MCF 10A (cell line): ENCODE measurements at regions of chr1 and their contacts with region 1.

Region 1: DNA sequence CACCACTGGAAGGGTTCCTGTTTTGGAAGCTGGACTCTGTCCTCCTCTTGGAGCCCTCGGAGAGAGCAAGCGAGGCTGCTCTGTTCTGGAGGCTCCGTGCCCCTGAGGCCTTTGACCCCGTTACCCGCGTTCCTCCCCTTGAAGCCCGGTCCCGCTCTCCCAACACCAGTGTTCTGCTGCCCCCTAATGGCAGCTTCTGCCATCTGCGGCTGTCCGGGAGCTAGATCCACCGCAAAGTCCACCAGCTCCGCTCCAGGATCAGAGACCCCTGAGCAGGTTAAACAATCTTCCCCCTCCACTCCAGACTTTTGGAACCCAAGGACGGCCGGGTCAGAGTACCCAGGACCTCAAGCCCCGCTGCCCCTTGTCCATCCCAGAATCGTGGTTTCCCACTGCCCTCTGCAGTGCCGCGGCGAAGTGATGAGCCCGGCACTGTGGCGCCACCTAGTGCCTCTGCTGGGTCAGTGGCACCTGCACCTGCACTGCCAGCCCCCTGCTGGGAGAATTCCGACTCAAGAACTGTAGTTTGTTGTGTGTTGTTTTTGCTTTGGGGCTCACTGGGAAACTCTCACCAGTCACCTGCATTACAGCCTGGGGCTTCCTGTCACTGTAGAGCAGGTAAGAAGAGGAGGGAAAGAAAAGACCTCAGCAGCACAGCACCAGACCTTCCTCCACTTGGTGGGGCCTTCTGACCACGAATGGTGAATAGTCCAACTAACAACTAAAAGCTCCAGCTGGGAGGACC is 63.5 kb upstream of the NFASC start:
- DNase-seq: peak; percentile 94
- H3K4me3 Mint-ChIP-seq: peak overlapping the region; percentile 69
- H3K27ac Mint-ChIP-seq: no peak overlapping the region
- H3K4me1 Mint-ChIP-seq: no peaks in the 10 kb centered on the region
- H3K27me3 Mint-ChIP-seq: peaks cover 25% of the 10 kb centered on the region
- CTCF ChIP-seq: peak; percentile 99

Region 2: GRCh38 chr1:204523605-204524215 is 283.4 kb before region 1 on chr1:
- CTCF ChIA-PET with region 1: interaction called, 19 read pairs
- POLR2A ChIA-PET with region 1: no interaction called
- intact Hi-C with region 1: no loop called
- DNase-seq: peak; percentile 50
- H3K4me3 Mint-ChIP-seq: peak overlapping the region; percentile 1
- H3K27ac Mint-ChIP-seq: peak overlapping the region; percentile 44
- H3K4me1 Mint-ChIP-seq: peaks cover 33% of the 10 kb centered on the region
- H3K27me3 Mint-ChIP-seq: no peaks in the 10 kb centered on the region
- CTCF ChIP-seq: no peak

Region 3: DNA sequence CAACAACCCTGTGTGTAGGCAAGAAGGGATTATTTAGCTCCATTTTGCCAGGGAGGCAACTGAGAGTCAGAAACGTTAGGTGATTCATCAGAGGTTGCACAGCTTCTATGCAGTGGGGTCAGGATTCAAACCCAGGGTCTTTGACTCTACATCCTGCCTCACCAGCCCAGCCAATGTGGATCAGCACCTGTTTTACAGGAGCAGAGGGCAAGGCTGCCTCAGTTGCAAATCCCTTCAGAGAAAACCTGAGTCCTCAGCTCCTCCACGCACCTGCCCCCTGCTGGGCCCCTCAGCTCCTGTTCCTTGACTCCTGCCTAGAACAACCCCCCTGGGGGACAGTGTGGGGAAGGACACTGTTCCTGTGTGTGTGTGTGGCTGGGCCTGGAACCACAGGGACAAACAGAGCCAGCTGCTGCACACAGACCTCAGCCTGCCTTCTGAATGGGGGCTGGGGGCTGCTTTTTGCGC is 183.2 kb before region 1 on chr1:
- CTCF ChIA-PET with region 1: interaction called, 21 read pairs
- POLR2A ChIA-PET with region 1: no interaction called
- intact Hi-C with region 1: no loop called
- DNase-seq: peak; percentile 47
- H3K4me3 Mint-ChIP-seq: no peak overlapping the region
- H3K27ac Mint-ChIP-seq: no peak overlapping the region
- H3K4me1 Mint-ChIP-seq: no peaks in the 10 kb centered on the region
- H3K27me3 Mint-ChIP-seq: peaks cover 29% of the 10 kb centered on the region
- CTCF ChIP-seq: no peak

Region 4: DNA sequence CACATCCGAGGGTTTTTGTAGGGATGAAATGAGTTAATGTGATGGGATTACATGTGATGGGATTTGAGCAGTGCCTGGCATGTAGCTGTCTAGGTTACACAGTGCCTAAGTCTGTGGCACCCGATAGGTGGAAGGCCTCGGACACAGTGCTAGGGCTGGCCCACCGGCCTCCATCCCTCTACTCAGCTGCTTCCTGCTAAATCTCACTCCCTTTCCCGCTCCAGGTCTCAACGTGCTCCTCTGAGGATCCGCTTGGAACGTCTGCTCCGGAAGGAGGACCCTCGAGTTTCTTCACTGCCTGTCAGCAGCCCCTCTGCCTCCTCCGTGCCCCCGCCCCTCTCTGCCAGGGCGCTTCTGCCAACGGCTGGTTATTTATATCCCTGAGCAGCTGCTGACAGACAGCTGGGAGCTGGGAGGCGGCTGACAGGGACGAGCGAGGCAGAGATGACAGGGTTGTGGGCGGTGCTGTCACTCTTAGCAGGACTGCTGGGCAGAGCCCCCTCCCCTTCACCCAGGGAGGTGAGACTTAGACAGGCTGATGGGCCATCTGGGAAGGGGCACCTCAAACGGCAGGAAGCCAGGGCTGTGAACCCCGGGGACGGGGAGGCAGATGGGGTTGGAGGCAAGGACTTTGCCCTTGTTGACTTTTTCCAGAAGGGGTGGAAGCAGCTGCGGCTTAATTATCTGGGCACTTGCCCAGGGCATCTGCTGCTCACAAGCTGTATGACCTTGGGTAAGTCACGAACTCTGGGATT is 95.0 kb before region 1 on chr1:
- CTCF ChIA-PET with region 1: interaction called, 34 read pairs
- POLR2A ChIA-PET with region 1: interaction called, 6 read pairs
- intact Hi-C with region 1: no loop called
- DNase-seq: no peak
- H3K4me3 Mint-ChIP-seq: no peak overlapping the region
- H3K27ac Mint-ChIP-seq: no peak overlapping the region
- H3K4me1 Mint-ChIP-seq: peaks cover 19% of the 10 kb centered on the region
- H3K27me3 Mint-ChIP-seq: peaks cover 31% of the 10 kb centered on the region
- CTCF ChIP-seq: no peak

Region 5: GRCh38 chr1:204819495-204819894 is 12.4 kb after region 1 on chr1:
- CTCF ChIA-PET with region 1: interaction called, 255 read pairs
- POLR2A ChIA-PET with region 1: interaction called, 4 read pairs
- intact Hi-C with region 1: no loop called
- DNase-seq: no peak
- H3K4me3 Mint-ChIP-seq: no peak overlapping the region
- H3K27ac Mint-ChIP-seq: no peak overlapping the region
- H3K4me1 Mint-ChIP-seq: no peaks in the 10 kb centered on the region
- H3K27me3 Mint-ChIP-seq: peaks cover 82% of the 10 kb centered on the region
- CTCF ChIP-seq: no peak

Region 6: GRCh38 chr1:204950353-204951001 is 143.4 kb after region 1 on chr1:
- CTCF ChIA-PET with region 1: interaction called, 165 read pairs
- POLR2A ChIA-PET with region 1: no interaction called
- intact Hi-C with region 1: no loop called
- DNase-seq: no peak
- H3K4me3 Mint-ChIP-seq: no peak overlapping the region
- H3K27ac Mint-ChIP-seq: no peak overlapping the region
- H3K4me1 Mint-ChIP-seq: no peaks in the 10 kb centered on the region
- H3K27me3 Mint-ChIP-seq: peaks cover 61% of the 10 kb centered on the region
- CTCF ChIP-seq: no peak

Region 7: GRCh38 chr1:205229399-205229871 is 422.3 kb after region 1 on chr1:
- CTCF ChIA-PET with region 1: no interaction called
- POLR2A ChIA-PET with region 1: no interaction called
- intact Hi-C with region 1: no loop called
- DNase-seq: peak; percentile 85
- H3K4me3 Mint-ChIP-seq: peak overlapping the region; percentile 63
- H3K27ac Mint-ChIP-seq: no peak overlapping the region
- H3K4me1 Mint-ChIP-seq: peaks cover 20% of the 10 kb centered on the region
- H3K27me3 Mint-ChIP-seq: no peaks in the 10 kb centered on the region
- CTCF ChIP-seq: peak; percentile 39